ENCODE measurements at regions of chr12 and their contacts with region 1.

Region 1: DNA sequence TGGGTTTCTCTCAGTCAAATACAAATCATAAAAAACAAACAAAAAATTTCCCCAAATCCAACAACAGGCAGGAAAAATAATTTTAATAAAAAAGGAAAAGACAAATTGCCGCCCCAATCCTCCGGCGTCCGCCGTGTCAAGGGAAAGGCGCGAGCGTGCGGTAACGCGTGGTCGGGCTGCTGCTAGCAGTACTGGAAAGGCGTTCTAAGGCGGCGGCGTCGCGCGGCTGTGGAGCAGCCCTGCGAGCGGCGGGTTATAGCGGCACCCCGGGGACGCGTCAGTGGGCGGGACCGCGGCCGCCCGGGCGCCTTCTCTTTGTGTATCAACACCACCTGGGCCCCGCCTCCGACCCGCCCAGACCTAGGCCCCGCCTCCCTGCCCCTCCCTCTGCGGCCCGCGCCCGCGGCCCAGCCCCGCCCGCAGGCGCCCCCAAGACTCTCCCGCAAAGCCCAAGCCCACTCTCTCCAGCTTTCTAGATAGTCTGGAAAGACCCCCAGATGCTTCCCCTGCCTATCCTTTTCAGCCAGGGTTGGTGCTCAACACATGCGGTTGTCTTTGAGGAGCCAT is at the start of gene SLC38A2:
- DNase-seq: no peak
- H3K4me3 ChIP-seq: peak within 1 kb of the TSS; percentile 73
- CTCF ChIP-seq: no peak

Region 2: GRCh38 chr12:46382964-46383653 is 10.5 kb after region 1 on chr12:
- CTCF ChIA-PET with region 1: no interaction called
- POLR2A ChIA-PET with region 1: interaction called, 32 read pairs
- DNase-seq: no peak
- H3K4me3 ChIP-seq: peak overlapping the region; percentile 70
- CTCF ChIP-seq: no peak

Region 3: DNA sequence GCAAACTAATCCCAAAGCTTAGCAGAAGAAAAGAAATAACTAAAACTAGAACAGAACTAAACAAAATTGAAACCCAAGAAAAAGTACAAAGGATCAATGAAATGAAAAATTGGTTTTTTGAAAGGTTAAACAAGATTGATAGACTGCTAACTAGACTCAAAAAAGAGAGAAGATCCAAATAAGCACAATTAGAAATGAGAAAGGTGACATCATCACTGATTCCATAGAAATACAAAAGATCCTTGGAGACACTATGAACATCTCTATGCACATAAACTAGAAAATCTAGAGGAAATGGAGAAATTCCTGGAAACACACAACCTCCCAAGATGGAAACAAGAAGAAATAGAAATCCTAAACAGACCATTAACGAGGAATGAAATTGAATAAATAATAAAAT is 47.0 kb after region 1 on chr12:
- CTCF ChIA-PET with region 1: no interaction called
- POLR2A ChIA-PET with region 1: no interaction called
- DNase-seq: no peak
- H3K4me3 ChIP-seq: no peak overlapping the region
- CTCF ChIP-seq: no peak

Region 4: DNA sequence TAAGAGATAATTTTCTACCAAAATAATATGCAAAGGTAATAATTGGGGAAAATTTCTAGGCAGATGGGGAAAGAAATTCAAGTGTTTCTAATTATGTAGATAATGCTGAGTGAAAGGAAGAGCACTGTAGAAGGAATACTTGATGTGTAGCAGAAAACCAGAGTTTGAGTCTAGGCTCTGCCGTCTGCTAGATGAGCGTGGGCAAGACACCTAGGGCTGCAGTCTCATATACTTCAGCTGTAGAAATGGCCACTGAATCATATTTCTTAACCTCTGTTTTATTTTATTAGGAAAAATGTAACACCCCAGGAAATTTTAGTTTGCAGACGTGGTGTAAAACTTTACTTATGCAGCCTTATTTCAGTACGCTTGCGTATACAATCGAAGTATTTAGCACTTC is 59.7 kb after region 1 on chr12:
- CTCF ChIA-PET with region 1: no interaction called
- POLR2A ChIA-PET with region 1: no interaction called
- DNase-seq: no peak
- H3K4me3 ChIP-seq: no peak overlapping the region
- CTCF ChIP-seq: no peak

Region 5: GRCh38 chr12:46523863-46524770 is 151.5 kb after region 1 on chr12:
- CTCF ChIA-PET with region 1: no interaction called
- POLR2A ChIA-PET with region 1: interaction called, 14 read pairs
- DNase-seq: peak; percentile 80
- H3K4me3 ChIP-seq: peak overlapping the region; percentile 44
- CTCF ChIP-seq: no peak

Region 6: GRCh38 chr12:46556105-46556559 is 183.5 kb after region 1 on chr12:
- CTCF ChIA-PET with region 1: no interaction called
- POLR2A ChIA-PET with region 1: interaction called, 25 read pairs
- DNase-seq: peak; percentile 98
- H3K4me3 ChIP-seq: no peak overlapping the region
- CTCF ChIP-seq: no peak